ENCODE measurements at regions of chr2 and their contacts with region 1.

Region 1: DNA sequence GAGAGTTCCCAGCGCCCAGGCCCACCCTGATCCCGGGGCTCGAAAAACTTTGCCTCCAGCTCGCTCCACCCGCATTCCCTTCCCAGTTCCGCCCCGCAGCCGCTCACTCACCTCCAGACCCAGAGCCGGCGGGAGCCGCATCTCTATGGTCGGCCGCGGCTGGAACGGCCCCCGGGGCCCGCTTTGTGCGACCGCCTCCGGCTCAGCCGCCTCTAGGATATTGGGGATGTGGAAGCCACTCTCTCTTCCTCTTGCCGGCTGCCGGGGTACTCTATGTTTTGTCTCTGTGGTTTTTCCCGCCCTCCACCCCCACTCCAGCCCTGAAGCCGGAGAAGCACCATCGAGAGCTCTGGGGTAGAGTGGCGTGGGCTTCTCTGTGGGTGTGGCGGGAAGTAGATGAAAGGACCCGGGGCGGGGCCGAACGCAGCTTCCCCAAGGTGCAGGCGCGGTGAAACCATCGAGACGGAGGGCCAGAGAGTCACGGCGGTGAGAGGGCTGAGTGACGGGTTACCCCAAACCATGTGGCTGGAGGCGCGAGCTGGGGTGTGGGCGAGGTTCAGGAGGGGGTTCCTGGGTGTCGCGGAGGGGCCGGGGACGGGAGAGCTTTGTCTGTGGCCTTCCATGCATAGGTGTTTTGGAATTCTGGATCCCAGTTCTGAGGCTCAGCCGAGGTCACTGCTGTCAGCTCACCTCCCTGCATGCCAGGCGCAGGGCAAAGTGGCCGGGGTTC is at the starts of genes BCS1L and ZNF142:
- DNase-seq: peak; percentile 91
- ATAC-seq: peak; percentile 97
- H3K4me3 ChIP-seq: peak within 1 kb of the TSS; percentile 65 to 93 (median 81)
- H3K4me3 Mint-ChIP-seq: peak within 1 kb of the TSS; percentile 99
- H3K27ac ChIP-seq: peak within 1 kb of the TSS; percentile 46 to 77
- H3K27ac Mint-ChIP-seq: peak within 1 kb of the TSS; percentile 95
- H3K4me1 ChIP-seq: peaks cover 12 to 16% of the 10 kb centered on the region in 2 donors
- H3K4me1 Mint-ChIP-seq: peaks cover 28% of the 10 kb centered on the region
- H3K27me3 ChIP-seq: no peaks in the 10 kb centered on the region
- H3K27me3 Mint-ChIP-seq: no peaks in the 10 kb centered on the region
- CTCF ChIP-seq: no peak
- total RNA-seq, gene BCS1L: 56.1 and 60.1 TPM in 2 replicates
- total RNA-seq, gene ZNF142: 51.1 and 56.1 TPM in 2 replicates

Region 2: GRCh38 chr2:217672491-217672900 is 986.9 kb before region 1 on chr2:
- CTCF ChIA-PET with region 1: no interaction called
- POLR2A ChIA-PET with region 1: no interaction called
- intact Hi-C with region 1: no loop called
- DNase-seq: no peak
- ATAC-seq: no peak
- H3K4me3 ChIP-seq: no peak overlapping the region
- H3K4me3 Mint-ChIP-seq: no peak overlapping the region
- H3K27ac ChIP-seq: no peak overlapping the region
- H3K27ac Mint-ChIP-seq: no peak overlapping the region
- H3K4me1 ChIP-seq: no peaks in the 10 kb centered on the region
- H3K4me1 Mint-ChIP-seq: no peaks in the 10 kb centered on the region
- H3K27me3 ChIP-seq: peaks cover 0 to 10% (median 0%) of the 10 kb centered on the region in 4 experiments
- H3K27me3 Mint-ChIP-seq: peaks cover 14% of the 10 kb centered on the region
- CTCF ChIP-seq: no peak

Region 3: DNA sequence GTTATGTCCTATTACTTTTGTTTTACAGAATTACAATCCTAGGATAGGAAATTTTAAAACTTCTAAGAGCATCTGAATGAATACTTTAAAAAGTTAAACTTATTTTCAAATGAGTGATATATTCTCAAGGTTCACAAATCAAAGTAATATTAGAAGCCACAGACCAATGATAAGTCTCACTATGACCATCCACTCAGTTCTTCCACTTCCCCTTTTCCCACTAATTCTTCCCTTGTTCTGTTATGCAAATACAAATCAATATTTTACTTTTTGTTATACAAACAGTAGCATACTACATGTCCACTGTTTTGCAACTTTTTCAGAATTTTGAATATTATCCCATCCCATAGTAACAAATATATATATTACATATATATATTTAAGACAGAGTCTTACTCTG is 111.4 kb before region 1 on chr2:
- CTCF ChIA-PET with region 1: no interaction called
- POLR2A ChIA-PET with region 1: no interaction called
- intact Hi-C with region 1: no loop called
- DNase-seq: no peak
- ATAC-seq: no peak
- H3K4me3 ChIP-seq: no peak overlapping the region
- H3K4me3 Mint-ChIP-seq: no peak overlapping the region
- H3K27ac ChIP-seq: no peak overlapping the region
- H3K27ac Mint-ChIP-seq: no peak overlapping the region
- H3K4me1 ChIP-seq: no peaks in the 10 kb centered on the region
- H3K4me1 Mint-ChIP-seq: no peaks in the 10 kb centered on the region
- H3K27me3 ChIP-seq: no peaks in the 10 kb centered on the region
- H3K27me3 Mint-ChIP-seq: no peaks in the 10 kb centered on the region
- CTCF ChIP-seq: no peak

Region 4: DNA sequence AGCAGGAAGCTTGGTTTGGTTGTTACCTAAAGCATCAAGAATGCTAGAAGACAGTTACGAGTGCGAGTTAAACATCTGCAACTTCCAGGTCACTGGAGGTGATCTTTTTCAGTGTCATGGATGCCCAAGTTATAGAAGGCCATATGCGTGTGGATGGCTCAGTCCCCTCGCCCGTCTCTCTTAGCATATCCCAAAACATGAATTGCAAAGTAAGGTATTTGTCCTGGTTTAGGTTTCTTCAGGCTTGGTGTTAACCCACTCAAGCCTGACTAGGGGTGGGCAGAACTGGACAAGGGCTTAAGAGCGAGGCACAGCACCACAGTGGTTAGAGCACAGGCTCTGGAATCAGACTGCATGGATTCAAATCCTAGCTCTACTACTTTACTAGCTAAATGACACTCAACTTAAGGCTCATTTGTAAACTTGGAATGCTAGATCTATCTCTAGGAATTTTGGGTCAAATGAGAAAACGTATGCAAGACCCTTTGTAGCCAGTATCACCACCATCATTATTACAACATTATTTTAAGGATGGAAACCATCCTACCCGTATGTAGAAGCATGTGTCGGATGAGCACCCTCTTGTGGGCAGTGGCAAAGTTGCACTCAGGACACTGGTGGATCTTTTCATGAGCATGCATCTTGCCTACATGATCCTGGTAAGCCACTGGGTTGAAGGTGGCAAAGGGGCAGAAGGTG is 11.2 kb before region 1 on chr2:
- CTCF ChIA-PET with region 1: interaction called, 39 read pairs
- POLR2A ChIA-PET with region 1: interaction called, 3 read pairs
- intact Hi-C with region 1: no loop called
- DNase-seq: peak; percentile 65
- ATAC-seq: peak; percentile 78
- H3K4me3 ChIP-seq: no peak overlapping the region
- H3K4me3 Mint-ChIP-seq: no peak overlapping the region
- H3K27ac ChIP-seq: peak overlapping the region in 1 of 2 donors; percentile 36
- H3K27ac Mint-ChIP-seq: peak overlapping the region; percentile 4
- H3K4me1 ChIP-seq: peaks cover 3 to 5% of the 10 kb centered on the region in 2 donors
- H3K4me1 Mint-ChIP-seq: peaks cover 6% of the 10 kb centered on the region
- H3K27me3 ChIP-seq: no peaks in the 10 kb centered on the region
- H3K27me3 Mint-ChIP-seq: no peaks in the 10 kb centered on the region
- CTCF ChIP-seq: peak; percentile 83

Region 5: GRCh38 chr2:218671654-218672566 is 12.5 kb after region 1 on chr2 and contains the starts of genes RNF25 and STK36:
- CTCF ChIA-PET with region 1: interaction called, 28 read pairs
- POLR2A ChIA-PET with region 1: interaction called, 19 read pairs
- intact Hi-C with region 1: loop called (anchors 1 kb)
- DNase-seq: peak; percentile 85
- ATAC-seq: peak; percentile 95
- H3K4me3 ChIP-seq: peak within 1 kb of the TSS; percentile 66 to 96 (median 84)
- H3K4me3 Mint-ChIP-seq: peak within 1 kb of the TSS; percentile 97
- H3K27ac ChIP-seq: peak within 1 kb of the TSS; percentile 8 to 84
- H3K27ac Mint-ChIP-seq: peak within 1 kb of the TSS; percentile 91
- H3K4me1 ChIP-seq: peaks cover 14 to 15% of the 10 kb centered on the region in 2 donors
- H3K4me1 Mint-ChIP-seq: peaks cover 20% of the 10 kb centered on the region
- H3K27me3 ChIP-seq: no peaks in the 10 kb centered on the region
- H3K27me3 Mint-ChIP-seq: no peaks in the 10 kb centered on the region
- CTCF ChIP-seq: no peak
- total RNA-seq, gene RNF25: 31.7 and 31.8 TPM in 2 replicates
- total RNA-seq, gene STK36: 41.3 and 42.9 TPM in 2 replicates

Region 6: DNA sequence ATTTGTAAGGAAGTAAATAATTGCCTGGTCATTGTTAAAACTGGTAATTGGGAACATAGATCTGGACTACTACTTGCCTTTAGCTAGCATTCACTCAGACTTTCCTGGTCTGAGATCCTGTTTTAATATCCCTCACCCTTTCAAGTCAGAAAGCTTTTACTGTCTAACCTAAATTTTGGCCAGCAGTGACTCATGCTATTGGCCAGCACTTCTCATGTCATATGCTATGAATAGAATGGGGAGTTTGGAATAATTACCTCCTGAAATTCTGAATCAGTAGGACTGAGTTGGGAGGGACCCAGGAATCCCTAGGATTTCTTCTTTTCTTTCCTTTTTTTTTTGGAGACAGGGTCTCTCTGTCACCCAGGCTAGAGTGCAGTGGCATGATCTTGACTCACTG is 31.8 kb after region 1 on chr2:
- CTCF ChIA-PET with region 1: interaction called, 15 read pairs
- POLR2A ChIA-PET with region 1: no interaction called
- intact Hi-C with region 1: loop called (anchors 1 kb)
- DNase-seq: no peak
- ATAC-seq: no peak
- H3K4me3 ChIP-seq: no peak overlapping the region
- H3K4me3 Mint-ChIP-seq: no peak overlapping the region
- H3K27ac ChIP-seq: no peak overlapping the region
- H3K27ac Mint-ChIP-seq: no peak overlapping the region
- H3K4me1 ChIP-seq: no peaks in the 10 kb centered on the region
- H3K4me1 Mint-ChIP-seq: no peaks in the 10 kb centered on the region
- H3K27me3 ChIP-seq: no peaks in the 10 kb centered on the region
- H3K27me3 Mint-ChIP-seq: no peaks in the 10 kb centered on the region
- CTCF ChIP-seq: no peak